AG04449 (cell line): ENCODE measurements at regions of chr4 and their contacts with region 1.

Region 1: DNA sequence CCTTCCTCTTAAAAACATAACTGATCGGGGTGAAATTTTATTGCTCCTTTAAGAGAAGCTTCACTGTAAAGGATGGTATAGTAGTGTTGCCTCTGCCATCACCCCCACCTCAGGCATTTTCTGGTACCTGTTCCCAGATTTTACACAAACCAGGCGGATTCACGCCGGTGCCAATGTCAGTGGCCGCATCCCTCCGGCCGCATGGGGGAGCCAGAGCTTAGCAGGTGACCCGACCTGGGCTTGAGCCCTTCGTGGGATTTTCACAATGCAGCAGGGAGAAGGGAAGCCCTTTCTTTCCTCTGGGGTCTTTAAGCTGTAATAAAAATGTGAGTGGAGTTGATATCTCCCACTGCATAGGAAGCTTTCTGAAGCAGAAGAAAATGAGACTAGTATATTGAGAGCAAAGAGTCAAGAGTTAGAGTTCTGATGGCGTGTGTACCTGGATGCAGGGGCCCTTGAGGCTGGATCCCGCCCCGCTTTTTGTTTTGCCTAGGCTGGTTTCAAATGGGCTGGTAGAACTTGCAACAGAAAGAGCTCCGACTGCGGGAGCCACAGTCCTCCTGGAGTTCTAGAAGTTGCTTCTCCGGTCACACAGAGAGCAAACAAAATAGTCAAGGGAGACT is 59.4 kb downstream of the POLR2B start:
- DNase-seq: no peak
- H3K4me3 ChIP-seq: no peak overlapping the region
- CTCF ChIP-seq: peak; percentile 84

Region 2: DNA sequence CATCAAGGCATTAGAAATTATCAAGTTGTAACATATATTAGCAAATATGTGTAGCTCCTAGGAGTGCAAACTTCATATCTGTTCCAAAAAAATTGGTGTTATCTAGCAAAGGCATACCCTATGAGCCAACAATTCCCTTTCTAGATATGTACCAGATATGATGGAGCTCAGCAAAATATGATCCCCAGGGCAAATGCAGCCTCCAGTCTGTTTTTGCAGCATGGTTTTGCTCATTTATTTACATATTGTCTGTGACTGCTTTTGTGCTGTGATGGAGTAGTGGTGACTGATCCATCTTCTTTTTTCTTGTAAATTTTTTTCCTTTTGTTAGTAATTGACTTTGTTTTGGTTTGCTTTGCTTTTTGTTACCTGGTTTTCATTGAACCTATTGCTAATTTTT is 1048.3 kb before region 1 on chr4:
- CTCF ChIA-PET with region 1: no interaction called
- POLR2A ChIA-PET with region 1: no interaction called
- DNase-seq: no peak
- H3K4me3 ChIP-seq: no peak overlapping the region
- CTCF ChIP-seq: no peak

Region 3: GRCh38 chr4:56668298-56668697 is 369.8 kb before region 1 on chr4:
- CTCF ChIA-PET with region 1: no interaction called
- POLR2A ChIA-PET with region 1: no interaction called
- DNase-seq: no peak
- H3K4me3 ChIP-seq: no peak overlapping the region
- CTCF ChIP-seq: peak; percentile 3

Region 4: DNA sequence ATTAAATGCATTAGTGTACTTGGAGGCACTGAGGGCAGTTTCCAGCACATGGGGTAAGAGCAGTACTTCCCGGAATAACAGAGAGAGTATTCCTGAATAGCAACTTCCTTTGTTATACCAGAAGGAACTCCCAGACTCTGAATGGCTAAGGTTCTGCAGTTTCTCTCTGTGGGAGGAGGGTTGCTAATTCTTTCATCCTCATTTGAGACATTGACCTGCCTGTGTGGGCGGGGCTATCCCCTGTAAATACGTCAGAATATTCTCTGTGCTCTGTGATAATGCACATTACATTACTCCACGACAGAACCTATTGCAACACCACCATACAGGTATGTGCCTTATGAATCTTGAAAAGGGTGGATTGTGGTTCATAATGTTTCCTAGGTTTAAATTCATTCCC is 269.3 kb before region 1 on chr4:
- CTCF ChIA-PET with region 1: no interaction called
- POLR2A ChIA-PET with region 1: no interaction called
- DNase-seq: no peak
- H3K4me3 ChIP-seq: no peak overlapping the region
- CTCF ChIP-seq: no peak

Region 5: GRCh38 chr4:56999751-57000150 is 38.3 kb before region 1 on chr4:
- CTCF ChIA-PET with region 1: no interaction called
- POLR2A ChIA-PET with region 1: no interaction called
- DNase-seq: no peak
- H3K4me3 ChIP-seq: no peak overlapping the region
- CTCF ChIP-seq: no peak

Region 6: DNA sequence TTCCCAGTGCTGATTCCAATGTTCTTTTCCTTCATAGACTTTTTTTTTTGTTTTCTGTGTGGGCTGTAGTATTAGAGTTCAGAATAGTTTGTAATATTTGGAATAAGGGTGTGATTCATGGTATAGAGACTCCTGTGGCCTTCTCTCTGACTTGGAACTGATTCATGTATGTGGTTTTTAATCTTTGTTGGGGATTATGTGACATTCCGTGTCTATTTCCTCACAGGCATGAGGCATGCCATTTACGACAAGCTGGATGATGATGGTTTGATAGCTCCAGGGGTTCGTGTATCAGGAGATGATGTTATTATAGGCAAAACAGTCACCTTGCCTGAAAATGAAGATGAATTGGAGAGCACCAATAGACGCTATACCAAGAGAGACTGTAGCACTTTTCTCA is 15.0 kb before region 1 on chr4:
- CTCF ChIA-PET with region 1: interaction called, 21 read pairs
- POLR2A ChIA-PET with region 1: no interaction called
- DNase-seq: peak; percentile 88
- H3K4me3 ChIP-seq: no peak overlapping the region
- CTCF ChIP-seq: no peak

Region 7: GRCh38 chr4:57064811-57065711 is 27.0 kb after region 1 on chr4:
- CTCF ChIA-PET with region 1: interaction called, 11 read pairs
- POLR2A ChIA-PET with region 1: interaction called, 7 read pairs
- DNase-seq: peak; percentile 95
- H3K4me3 ChIP-seq: no peak overlapping the region; the same call in none of the 2 replicates
- CTCF ChIP-seq: no peak

Region 8: GRCh38 chr4:57102050-57102624 is 64.0 kb after region 1 on chr4:
- CTCF ChIA-PET with region 1: interaction called, 12 read pairs
- POLR2A ChIA-PET with region 1: interaction called, 3 read pairs
- DNase-seq: peak; percentile 82
- H3K4me3 ChIP-seq: no peak overlapping the region
- CTCF ChIP-seq: no peak

Region 9: DNA sequence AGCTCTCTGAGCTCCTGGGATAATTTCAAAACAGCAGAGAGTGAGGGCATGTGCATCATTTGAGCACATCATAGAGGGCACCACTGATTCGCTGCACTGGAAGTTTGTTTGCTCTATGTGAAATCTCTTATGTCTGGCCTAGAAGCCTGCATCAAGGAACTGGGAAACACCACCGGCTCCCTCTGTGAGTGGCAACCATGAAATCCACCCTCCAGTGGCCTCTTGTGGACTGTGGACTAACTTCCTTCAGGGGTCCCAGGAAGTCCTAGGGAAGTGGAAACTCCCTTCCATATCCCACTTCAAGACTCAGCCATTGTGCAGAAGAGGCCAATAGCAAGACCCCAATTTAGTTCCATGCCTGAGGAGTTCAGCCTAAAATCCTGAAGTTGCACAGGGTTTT is 120.1 kb after region 1 on chr4:
- CTCF ChIA-PET with region 1: interaction called, 73 read pairs
- POLR2A ChIA-PET with region 1: no interaction called
- DNase-seq: no peak
- H3K4me3 ChIP-seq: no peak overlapping the region
- CTCF ChIP-seq: no peak